Calu3 (cell line): ENCODE measurements at regions of chr15 and their contacts with region 1.

Region 1: DNA sequence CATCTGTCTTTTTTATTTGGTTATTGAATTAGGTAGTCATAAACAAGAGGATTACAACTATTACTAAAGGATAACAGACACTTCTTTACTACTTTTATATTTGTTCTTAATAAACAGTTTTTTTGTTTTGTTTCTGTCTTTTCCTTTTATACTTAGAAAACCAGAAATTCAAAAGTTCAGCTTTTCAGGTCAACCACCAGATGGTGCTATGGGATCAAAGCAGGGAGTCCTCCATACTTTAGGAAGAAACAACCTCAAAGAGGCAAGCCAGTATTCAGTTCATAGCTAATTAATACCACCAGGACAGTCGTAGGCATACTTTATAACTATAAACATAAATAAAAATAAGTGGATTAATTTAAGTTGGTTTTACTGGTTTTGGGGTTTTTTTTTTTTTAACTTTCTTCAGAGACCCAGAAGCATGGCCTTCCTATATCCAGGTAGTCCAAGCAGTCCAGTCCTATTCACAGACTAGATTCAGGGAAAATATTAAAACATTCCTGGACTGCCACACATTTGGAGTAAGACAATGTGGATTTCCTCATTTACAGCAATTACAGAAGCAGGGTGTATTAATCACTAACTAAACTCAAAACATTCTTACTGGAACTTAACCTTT is 16.0 kb upstream of the EID1 start:
- DNase-seq: peak; percentile 65
- H3K4me3 Mint-ChIP-seq: no peak overlapping the region
- H3K27ac Mint-ChIP-seq: no peak overlapping the region
- H3K4me1 Mint-ChIP-seq: peaks cover 30% of the 10 kb centered on the region
- H3K27me3 Mint-ChIP-seq: no peaks in the 10 kb centered on the region
- CTCF ChIP-seq: peak; percentile 32

Region 2: GRCh38 chr15:48975472-48976419 is 113.8 kb after region 1 on chr15:
- CTCF ChIA-PET with region 1: interaction called, 15 read pairs
- intact Hi-C with region 1: loop called (anchors 2 kb)
- DNase-seq: peak; percentile 84
- H3K4me3 Mint-ChIP-seq: peak overlapping the region; percentile 50
- H3K27ac Mint-ChIP-seq: no peak overlapping the region
- H3K4me1 Mint-ChIP-seq: peaks cover 7% of the 10 kb centered on the region
- H3K27me3 Mint-ChIP-seq: no peaks in the 10 kb centered on the region
- CTCF ChIP-seq: peak; percentile 84

Region 3: GRCh38 chr15:49145651-49146609 is 284.0 kb after region 1 on chr15:
- CTCF ChIA-PET with region 1: interaction called, 6 read pairs
- intact Hi-C with region 1: loop called (anchors 1 kb)
- DNase-seq: peak; percentile 60
- H3K4me3 Mint-ChIP-seq: peak overlapping the region; percentile 23
- H3K27ac Mint-ChIP-seq: peak overlapping the region; percentile 43
- H3K4me1 Mint-ChIP-seq: peaks cover 29% of the 10 kb centered on the region
- H3K27me3 Mint-ChIP-seq: no peaks in the 10 kb centered on the region
- CTCF ChIP-seq: peak; percentile 40

Region 4: DNA sequence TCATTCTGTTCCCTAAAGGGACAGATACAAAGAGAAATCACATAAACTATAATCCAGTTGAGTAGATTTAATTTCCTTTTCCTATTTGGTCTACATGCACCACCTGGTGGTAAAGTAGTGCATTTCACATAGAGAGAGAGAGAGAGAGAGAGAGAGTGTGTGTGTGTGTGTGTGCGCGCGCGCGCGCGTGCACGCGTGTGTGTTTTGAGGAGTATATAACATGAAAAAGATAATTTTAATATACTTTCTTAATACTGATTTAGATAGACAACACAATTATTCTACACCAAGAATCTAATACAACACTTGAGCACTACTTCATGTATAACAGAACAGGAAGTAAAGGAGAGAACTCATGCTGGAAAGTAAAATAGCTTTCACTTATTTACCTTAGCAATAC is 560.1 kb after region 1 on chr15:
- CTCF ChIA-PET with region 1: interaction called, 6 read pairs
- intact Hi-C with region 1: loop called (anchors 2 kb)
- DNase-seq: peak; percentile 55
- H3K4me3 Mint-ChIP-seq: peak overlapping the region; percentile 22
- H3K27ac Mint-ChIP-seq: peak overlapping the region; percentile 7
- H3K4me1 Mint-ChIP-seq: no peaks in the 10 kb centered on the region
- H3K27me3 Mint-ChIP-seq: no peaks in the 10 kb centered on the region
- CTCF ChIP-seq: peak; percentile 67